ENCODE measurements at regions of chr22 and their contacts with region 1.

Region 1: GRCh38 chr22:50620593-50621355 is 7.2 kb downstream of the ARSA start:
- DNase-seq: no peak
- H3K4me3 ChIP-seq: peak overlapping the region in 1 of 4 experiments; percentile 42; a peak in 2 of 8 replicates
- H3K27ac ChIP-seq: no peak overlapping the region
- H3K4me1 ChIP-seq: peaks cover 0 to 10% (median 7%) of the 10 kb centered on the region in 4 experiments; a peak in 6 of 7 replicates
- H3K27me3 ChIP-seq: peaks cover 0 to 3% (median 0%) of the 10 kb centered on the region in 4 experiments; a peak in 3 of 7 replicates
- CTCF ChIP-seq: peak in 2 of 3 experiments; percentile 74 to 78; a peak in 2 of 4 replicates
- EP300 ChIP-seq: no peak
- POLR2A ChIP-seq: no peak
- RAD21 ChIP-seq: no peak

Region 2: GRCh38 chr22:50525390-50526068 is 95.2 kb before region 1 on chr22 and contains the start of gene SCO2:
- CTCF ChIA-PET with region 1: interaction called, 16 read pairs
- POLR2A ChIA-PET with region 1: no interaction called
- DNase-seq: peak; percentile 89 to 96
- H3K4me3 ChIP-seq: peak within 1 kb of the TSS; percentile 63 to 78 (median 67)
- H3K27ac ChIP-seq: no peak within 1 kb of the TSS; the same call in 1 of the 2 replicates
- H3K4me1 ChIP-seq: peaks cover 0 to 16% (median 7%) of the 10 kb centered on the region in 4 experiments; a peak in 5 of 7 replicates
- H3K27me3 ChIP-seq: peaks cover 23 to 39% (median 33%) of the 10 kb centered on the region in 4 experiments
- CTCF ChIP-seq: peak; percentile 49 to 61 (median 52)
- EP300 ChIP-seq: no peak
- POLR2A ChIP-seq: 0 out of 3 replicates have a peak, but pooled peaks of 1 of the 2 experiments have one; percentile 33
- RAD21 ChIP-seq: peak; percentile 32 to 51; a peak in 3 of 4 replicates
- total RNA-seq, gene SCO2: 2.2 TPM in 1 of 2 replicates, not detected in the other

Region 3: DNA sequence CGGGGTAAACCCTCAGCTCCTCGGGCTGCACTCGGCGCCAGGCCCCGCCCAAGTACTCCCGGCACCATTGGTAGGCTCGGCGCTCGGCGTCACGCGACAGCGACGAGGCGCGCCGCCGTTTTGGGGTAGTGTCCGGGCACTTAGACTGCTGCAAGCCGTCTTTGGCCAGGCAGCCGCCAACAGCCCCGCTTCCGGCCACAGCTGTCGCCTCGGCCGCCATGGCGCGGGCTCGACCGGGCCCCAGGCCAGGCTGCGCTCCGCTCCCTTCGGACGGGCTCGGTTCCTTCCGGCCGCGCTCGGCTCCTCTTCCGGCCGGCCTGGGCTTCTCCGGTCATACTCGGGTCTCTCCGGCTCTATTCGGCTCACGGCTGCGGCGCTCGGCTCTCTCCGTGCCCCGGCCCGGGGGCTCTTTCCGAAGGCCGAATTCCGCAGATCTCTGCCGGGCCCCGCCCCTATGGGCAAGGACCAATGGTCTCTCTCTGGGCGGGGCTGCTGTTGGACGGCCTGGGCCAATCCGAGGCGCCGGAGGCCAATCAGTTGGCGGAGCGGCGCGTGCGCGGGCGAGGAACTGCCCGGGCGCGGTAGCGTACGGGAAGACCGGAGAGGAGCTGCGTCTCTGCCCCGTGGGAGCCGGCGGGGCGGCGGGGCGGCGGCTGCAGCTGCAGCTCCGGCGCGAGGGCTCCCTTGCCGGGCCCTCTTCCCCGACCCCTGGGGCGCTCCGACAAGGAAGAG is 38.0 kb before region 1 on chr22 and contains the start of gene CHKB:
- CTCF ChIA-PET with region 1: interaction called, 65 read pairs
- POLR2A ChIA-PET with region 1: no interaction called
- DNase-seq: peak; percentile 88 to 98
- H3K4me3 ChIP-seq: peak within 1 kb of the TSS; percentile 72 to 91 (median 80)
- H3K27ac ChIP-seq: peak within 1 kb of the TSS; percentile 86
- H3K4me1 ChIP-seq: peaks cover 4 to 15% (median 7%) of the 10 kb centered on the region in 4 experiments
- H3K27me3 ChIP-seq: no peaks in the 10 kb centered on the region
- CTCF ChIP-seq: no peak
- EP300 ChIP-seq: no peak
- POLR2A ChIP-seq: peak in 1 of 2 experiments; percentile 62; a peak in 1 of 3 replicates
- RAD21 ChIP-seq: no peak
- total RNA-seq, gene CHKB: 42.2 and 51.8 TPM in 2 replicates

Region 4: GRCh38 chr22:50606165-50606945 is 14.4 kb before region 1 on chr22:
- CTCF ChIA-PET with region 1: interaction called, 39 read pairs
- POLR2A ChIA-PET with region 1: interaction called, 3 read pairs
- DNase-seq: peak in 1 of 2 experiments; percentile 46
- H3K4me3 ChIP-seq: no peak overlapping the region
- H3K27ac ChIP-seq: no peak overlapping the region
- H3K4me1 ChIP-seq: peaks cover 0 to 12% (median under 1%) of the 10 kb centered on the region in 4 experiments; a peak in 4 of 7 replicates
- H3K27me3 ChIP-seq: peaks cover 38 to 54% (median 48%) of the 10 kb centered on the region in 4 experiments; a peak in 6 of 7 replicates
- CTCF ChIP-seq: peak; percentile 41 to 48 (median 43)
- EP300 ChIP-seq: no peak
- POLR2A ChIP-seq: no peak
- RAD21 ChIP-seq: peak; percentile 14 to 40; a peak in 2 of 4 replicates